ENCODE measurements at regions of chr5 and their contacts with region 1.

Region 1: GRCh38 chr5:41270423-41271251 is 57.3 kb upstream of the C6 start:
- DNase-seq: peak in 2 of 3 donors; percentile 33 to 53
- ATAC-seq: peak; percentile 92 to 95
- H3K4me3 ChIP-seq: no peak overlapping the region
- H3K27ac ChIP-seq: no peak overlapping the region
- H3K4me1 ChIP-seq: no peaks in the 10 kb centered on the region
- H3K27me3 ChIP-seq: no peaks in the 10 kb centered on the region

Region 2: DNA sequence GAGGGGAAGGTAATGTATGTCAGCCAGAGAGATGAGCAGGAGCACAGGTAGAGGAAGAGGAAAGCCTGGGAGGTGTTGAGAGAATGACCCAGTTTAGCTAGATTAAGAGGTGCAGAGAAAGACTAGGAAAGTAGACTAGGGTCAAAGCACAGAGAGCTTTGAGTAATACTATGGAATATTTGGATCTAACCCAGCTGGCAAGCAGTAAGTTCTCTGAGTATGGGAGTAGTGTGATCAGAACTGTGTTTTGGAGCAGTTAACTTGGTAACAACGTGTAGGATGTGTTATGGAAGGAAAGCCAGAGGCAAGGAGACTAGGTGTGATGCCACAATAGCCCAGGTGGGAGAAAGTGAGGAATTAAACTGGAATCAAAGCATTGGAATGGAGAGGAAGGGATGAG is 675.8 kb before region 1 on chr5:
- intact Hi-C with region 1: no loop called
- DNase-seq: no peak
- ATAC-seq: no peak
- H3K4me3 ChIP-seq: no peak overlapping the region
- H3K27ac ChIP-seq: no peak overlapping the region
- H3K4me1 ChIP-seq: no peaks in the 10 kb centered on the region
- H3K27me3 ChIP-seq: no peaks in the 10 kb centered on the region

Region 3: GRCh38 chr5:41115281-41115680 is 155.4 kb before region 1 on chr5:
- intact Hi-C with region 1: no loop called
- DNase-seq: no peak
- ATAC-seq: no peak
- H3K4me3 ChIP-seq: no peak overlapping the region
- H3K27ac ChIP-seq: no peak overlapping the region
- H3K4me1 ChIP-seq: no peaks in the 10 kb centered on the region
- H3K27me3 ChIP-seq: no peaks in the 10 kb centered on the region

Region 4: GRCh38 chr5:41457094-41457493 is 186.5 kb after region 1 on chr5:
- intact Hi-C with region 1: loop called in 1 of 4 experiments (anchors 5 kb)
- DNase-seq: peak in 2 of 3 donors; percentile 45 to 52
- ATAC-seq: peak; percentile 85 to 88
- H3K4me3 ChIP-seq: no peak overlapping the region
- H3K27ac ChIP-seq: peak overlapping the region; percentile 97
- H3K4me1 ChIP-seq: no peaks in the 10 kb centered on the region
- H3K27me3 ChIP-seq: no peaks in the 10 kb centered on the region

Region 5: DNA sequence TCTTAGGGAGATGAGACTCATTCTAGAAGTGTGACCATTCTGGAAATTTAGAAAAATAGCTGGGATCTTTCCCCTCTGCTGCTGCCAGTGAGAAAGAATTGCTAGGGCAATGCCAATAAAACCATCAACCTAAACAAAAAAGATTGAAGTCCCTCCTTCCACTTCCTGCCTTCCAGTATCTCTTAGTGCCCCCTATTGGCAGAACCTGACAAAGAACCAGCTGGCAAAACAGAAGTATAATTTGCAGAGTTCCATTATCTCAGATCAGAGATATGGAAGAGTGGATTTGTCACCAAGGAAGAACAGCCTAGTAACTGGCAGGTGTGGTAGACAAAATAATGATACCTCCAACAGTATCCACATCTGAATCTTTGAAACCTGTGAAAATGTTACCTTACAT is 253.5 kb after region 1 on chr5:
- intact Hi-C with region 1: loop called in 2 of 4 experiments (anchors 5 to 10 kb)
- DNase-seq: no peak
- ATAC-seq: no peak
- H3K4me3 ChIP-seq: no peak overlapping the region
- H3K27ac ChIP-seq: no peak overlapping the region
- H3K4me1 ChIP-seq: no peaks in the 10 kb centered on the region
- H3K27me3 ChIP-seq: no peaks in the 10 kb centered on the region

Region 6: GRCh38 chr5:41843456-41844370 is 573.1 kb after region 1 on chr5:
- intact Hi-C with region 1: loop called in 1 of 4 experiments (anchors 10 kb)
- DNase-seq: no peak
- ATAC-seq: peak; percentile 72 to 74
- H3K4me3 ChIP-seq: no peak overlapping the region
- H3K27ac ChIP-seq: no peak overlapping the region
- H3K4me1 ChIP-seq: no peaks in the 10 kb centered on the region
- H3K27me3 ChIP-seq: no peaks in the 10 kb centered on the region

Region 7: DNA sequence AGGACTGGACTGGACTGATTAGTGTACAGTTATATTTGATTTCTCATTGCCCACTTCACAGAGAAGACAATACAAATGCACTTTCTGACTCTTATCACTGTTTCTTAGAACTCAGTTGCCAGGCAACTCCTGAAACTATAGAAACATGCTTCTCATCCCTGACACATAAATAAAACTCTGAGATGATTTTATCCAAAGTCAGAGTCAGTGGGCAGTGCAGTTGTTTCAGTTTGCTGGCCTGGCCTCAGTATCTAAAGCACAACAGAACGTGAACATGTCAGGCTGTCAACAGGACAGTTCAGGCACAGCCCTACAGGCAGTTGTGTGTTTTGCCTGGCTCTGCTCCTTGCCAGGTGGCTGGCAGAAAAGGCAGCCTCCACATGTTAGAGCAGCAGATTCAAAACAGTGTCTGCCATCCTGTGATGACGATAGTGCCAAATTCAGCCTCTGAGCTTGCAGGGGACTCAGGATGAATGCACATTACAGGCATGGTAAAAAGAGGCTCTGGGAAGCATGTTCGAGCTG is 1420.8 kb after region 1 on chr5:
- intact Hi-C with region 1: no loop called
- DNase-seq: peak; percentile 22 to 71 (median 65)
- ATAC-seq: peak; percentile 87 to 95
- H3K4me3 ChIP-seq: no peak overlapping the region
- H3K27ac ChIP-seq: no peak overlapping the region
- H3K4me1 ChIP-seq: peaks cover 3% of the 10 kb centered on the region
- H3K27me3 ChIP-seq: no peaks in the 10 kb centered on the region